HAP-1 (cell line): ENCODE measurements at regions of chr15 and their contacts with region 1.

Region 1: DNA sequence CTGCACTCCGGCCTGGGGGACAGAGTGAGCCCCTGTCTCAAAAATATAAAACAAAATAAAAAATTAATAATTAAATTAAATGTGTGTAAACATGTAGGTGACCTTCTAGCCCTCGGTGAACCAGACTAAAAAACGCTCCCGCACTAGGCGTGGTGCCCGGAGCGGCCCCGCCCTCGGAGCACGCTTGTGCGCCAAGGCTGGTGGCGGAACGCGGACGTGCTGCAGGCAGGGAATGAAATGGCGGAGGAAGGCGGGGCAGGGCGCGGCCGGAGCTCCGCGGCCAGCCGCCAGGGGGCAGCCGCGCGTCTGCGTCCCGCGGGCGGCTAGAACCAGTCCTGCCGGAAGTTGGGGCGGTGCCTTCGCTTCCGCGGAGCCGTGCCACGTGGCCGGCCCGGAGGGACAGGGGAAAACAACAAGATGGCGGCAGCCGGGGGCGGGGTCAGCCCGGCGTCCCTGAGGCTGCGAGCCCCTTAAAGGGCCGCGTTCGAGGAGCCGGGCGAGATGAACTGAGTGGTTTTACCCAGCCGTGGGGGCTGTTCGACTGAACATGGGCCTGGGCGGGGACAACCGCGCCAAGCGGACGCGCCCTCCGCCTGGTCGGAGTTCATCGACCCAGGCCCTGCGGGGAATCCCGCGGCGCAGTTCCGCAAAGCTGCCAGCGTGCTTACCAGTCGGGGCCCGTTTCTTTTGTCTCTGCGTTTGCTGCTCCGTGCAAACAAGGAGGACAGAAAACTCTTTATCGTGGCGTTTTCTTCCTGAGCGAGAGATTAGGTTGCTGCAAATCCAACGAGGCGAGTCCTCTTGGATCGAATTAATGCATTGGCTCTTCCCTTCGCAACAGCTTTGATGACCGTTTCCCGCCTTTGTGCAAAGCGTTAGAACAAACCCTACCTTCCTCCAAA is 90.9 kb upstream of the CHD2 start:
- DNase-seq: peak; percentile 95 to 99
- H3K4me3 ChIP-seq: peak overlapping the region; percentile 39
- H3K4me1 ChIP-seq: peaks cover 31% of the 10 kb centered on the region
- H3K27me3 ChIP-seq: no peaks in the 10 kb centered on the region; the same call in 1 of the 2 replicates

Region 2: GRCh38 chr15:91067026-91067425 is 1742.2 kb before region 1 on chr15:
- in situ Hi-C with region 1: no loop called
- DNase-seq: no peak
- H3K4me3 ChIP-seq: no peak overlapping the region
- H3K4me1 ChIP-seq: no peaks in the 10 kb centered on the region
- H3K27me3 ChIP-seq: peaks cover 28% of the 10 kb centered on the region

Region 3: DNA sequence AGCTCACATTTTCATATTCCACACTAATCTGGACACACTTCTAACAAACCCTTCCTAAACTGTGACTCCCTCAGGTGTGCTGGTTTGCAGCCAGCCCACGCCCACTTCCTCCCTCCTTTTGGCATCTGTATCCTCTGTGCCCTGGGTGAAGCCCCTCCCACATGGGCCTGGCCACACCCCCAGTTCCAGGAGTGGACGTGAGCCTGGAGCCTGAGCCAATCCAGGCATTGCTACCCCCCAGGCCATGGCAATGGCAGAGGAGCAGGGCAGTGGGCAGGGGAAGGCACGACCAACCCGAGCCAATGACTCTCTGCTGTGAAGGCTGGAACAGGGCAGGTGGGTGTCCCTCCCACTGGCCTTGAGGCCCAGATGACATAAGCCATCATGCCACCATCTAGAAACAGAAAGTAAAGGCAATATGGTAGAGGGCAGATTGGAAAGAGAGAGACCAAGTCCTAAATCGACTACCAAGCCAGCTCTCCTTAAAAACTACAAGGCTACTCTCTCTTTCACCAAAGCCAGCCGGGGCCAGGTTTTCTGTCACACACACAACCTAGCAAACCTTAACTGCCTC is 172.2 kb before region 1 on chr15:
- in situ Hi-C with region 1: no loop called
- DNase-seq: peak in 1 of 2 experiments; percentile 81
- H3K4me3 ChIP-seq: no peak overlapping the region
- H3K4me1 ChIP-seq: peaks cover 55% of the 10 kb centered on the region
- H3K27me3 ChIP-seq: no peaks in the 10 kb centered on the region

Region 4: GRCh38 chr15:92917606-92918407 is 108.6 kb after region 1 on chr15:
- in situ Hi-C with region 1: loop called (anchors 10 kb)
- DNase-seq: peak; percentile 88 to 96
- H3K4me3 ChIP-seq: no peak overlapping the region
- H3K4me1 ChIP-seq: peaks cover 56% of the 10 kb centered on the region
- H3K27me3 ChIP-seq: no peaks in the 10 kb centered on the region